ENCODE measurements at regions of chr7 and their contacts with region 1.

Region 1: DNA sequence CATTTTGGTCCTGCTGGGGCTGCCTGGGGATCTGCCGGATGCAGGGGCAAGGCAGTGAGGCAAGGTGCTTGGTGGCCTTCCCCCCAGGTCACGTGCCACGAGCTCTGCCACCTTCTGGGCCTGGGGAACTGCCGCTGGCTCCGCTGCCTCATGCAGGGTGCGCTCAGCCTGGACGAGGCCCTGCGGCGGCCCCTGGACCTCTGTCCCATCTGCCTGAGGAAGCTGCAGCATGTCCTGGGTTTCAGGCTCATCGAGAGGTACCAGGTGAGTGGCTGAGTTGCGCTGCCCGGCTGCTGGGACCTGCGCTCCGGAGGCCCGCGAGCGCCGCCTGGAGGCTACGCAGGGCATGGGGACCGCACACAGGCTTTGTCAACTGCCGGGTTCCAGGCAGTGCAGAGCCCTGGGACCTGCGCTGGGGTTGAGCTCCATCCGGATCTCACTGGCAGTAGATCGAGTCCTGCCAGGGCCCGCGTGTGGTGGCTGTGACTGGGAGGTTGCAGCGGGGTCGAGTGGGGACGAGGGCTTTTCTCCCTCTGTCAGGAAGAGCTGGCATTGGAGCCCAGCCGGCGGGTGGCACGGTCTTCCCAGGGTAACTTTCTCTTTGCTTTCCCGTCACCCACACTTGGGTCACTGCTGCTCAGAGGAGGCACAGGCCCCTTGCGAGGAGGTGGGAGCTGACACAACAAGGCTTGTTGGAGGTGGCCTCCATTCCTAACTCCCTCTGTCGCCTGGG is 21.7 kb downstream of the AMZ1 start:
- DNase-seq: peak; percentile 81
- ATAC-seq: peak; percentile 79
- H3K4me3 Mint-ChIP-seq: peak overlapping the region; percentile 88
- H3K27ac Mint-ChIP-seq: peak overlapping the region; percentile 94
- H3K4me1 Mint-ChIP-seq: peaks cover 41% of the 10 kb centered on the region
- H3K27me3 Mint-ChIP-seq: no peaks in the 10 kb centered on the region
- CTCF ChIP-seq: peak; percentile 75

Region 2: GRCh38 chr7:2451171-2452073 is 258.3 kb before region 1 on chr7:
- CTCF ChIA-PET with region 1: interaction called, 34 read pairs
- POLR2A ChIA-PET with region 1: interaction called, 12 read pairs
- intact Hi-C with region 1: loop called (anchors 1 kb)
- DNase-seq: peak; percentile 81
- ATAC-seq: peak; percentile 99
- H3K4me3 Mint-ChIP-seq: peak overlapping the region; percentile 74
- H3K27ac Mint-ChIP-seq: no peak overlapping the region
- H3K4me1 Mint-ChIP-seq: peaks cover 6% of the 10 kb centered on the region
- H3K27me3 Mint-ChIP-seq: no peaks in the 10 kb centered on the region
- CTCF ChIP-seq: peak; percentile 88

Region 3: GRCh38 chr7:2508327-2509215 is 201.1 kb before region 1 on chr7:
- CTCF ChIA-PET with region 1: interaction called, 5 read pairs
- POLR2A ChIA-PET with region 1: interaction called, 30 read pairs
- intact Hi-C with region 1: no loop called
- DNase-seq: peak; percentile 62
- ATAC-seq: peak; percentile 51
- H3K4me3 Mint-ChIP-seq: peak overlapping the region; percentile 65
- H3K27ac Mint-ChIP-seq: peak overlapping the region; percentile 95
- H3K4me1 Mint-ChIP-seq: peaks cover 68% of the 10 kb centered on the region
- H3K27me3 Mint-ChIP-seq: no peaks in the 10 kb centered on the region
- CTCF ChIP-seq: no peak

Region 4: DNA sequence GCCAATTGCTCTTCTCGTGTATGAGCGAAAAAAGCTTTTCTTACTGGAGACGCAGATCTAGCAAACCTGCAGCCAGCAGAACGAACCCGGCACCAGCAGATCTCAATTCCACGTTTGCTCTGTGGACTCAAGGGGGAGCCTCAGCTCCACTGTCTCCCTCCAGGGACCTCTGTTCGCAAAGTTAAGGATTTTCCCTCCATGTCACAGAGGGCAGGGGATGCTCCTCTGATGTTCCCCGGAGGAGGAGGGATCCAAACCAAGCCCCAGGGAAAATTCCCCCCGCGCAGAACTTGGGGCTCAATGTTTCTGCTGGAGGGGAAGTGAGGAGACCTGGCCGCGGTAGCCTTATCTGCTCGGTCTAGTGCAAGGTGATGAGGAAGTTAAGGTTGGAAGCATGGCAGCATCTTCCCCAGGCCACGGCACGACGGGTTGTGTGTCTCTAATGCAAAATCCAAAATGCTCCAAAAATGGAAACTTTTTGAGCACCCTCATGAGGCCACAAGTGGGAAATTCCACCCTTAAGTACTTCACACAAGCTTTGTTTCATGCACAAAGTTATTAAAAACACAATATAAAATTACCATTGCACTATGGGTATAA is 141.9 kb before region 1 on chr7:
- CTCF ChIA-PET with region 1: interaction called, 9 read pairs
- POLR2A ChIA-PET with region 1: no interaction called
- intact Hi-C with region 1: loop called (anchors 1 kb)
- DNase-seq: no peak
- ATAC-seq: peak; percentile 58
- H3K4me3 Mint-ChIP-seq: no peak overlapping the region
- H3K27ac Mint-ChIP-seq: no peak overlapping the region
- H3K4me1 Mint-ChIP-seq: peaks cover 18% of the 10 kb centered on the region
- H3K27me3 Mint-ChIP-seq: no peaks in the 10 kb centered on the region
- CTCF ChIP-seq: no peak

Region 5: DNA sequence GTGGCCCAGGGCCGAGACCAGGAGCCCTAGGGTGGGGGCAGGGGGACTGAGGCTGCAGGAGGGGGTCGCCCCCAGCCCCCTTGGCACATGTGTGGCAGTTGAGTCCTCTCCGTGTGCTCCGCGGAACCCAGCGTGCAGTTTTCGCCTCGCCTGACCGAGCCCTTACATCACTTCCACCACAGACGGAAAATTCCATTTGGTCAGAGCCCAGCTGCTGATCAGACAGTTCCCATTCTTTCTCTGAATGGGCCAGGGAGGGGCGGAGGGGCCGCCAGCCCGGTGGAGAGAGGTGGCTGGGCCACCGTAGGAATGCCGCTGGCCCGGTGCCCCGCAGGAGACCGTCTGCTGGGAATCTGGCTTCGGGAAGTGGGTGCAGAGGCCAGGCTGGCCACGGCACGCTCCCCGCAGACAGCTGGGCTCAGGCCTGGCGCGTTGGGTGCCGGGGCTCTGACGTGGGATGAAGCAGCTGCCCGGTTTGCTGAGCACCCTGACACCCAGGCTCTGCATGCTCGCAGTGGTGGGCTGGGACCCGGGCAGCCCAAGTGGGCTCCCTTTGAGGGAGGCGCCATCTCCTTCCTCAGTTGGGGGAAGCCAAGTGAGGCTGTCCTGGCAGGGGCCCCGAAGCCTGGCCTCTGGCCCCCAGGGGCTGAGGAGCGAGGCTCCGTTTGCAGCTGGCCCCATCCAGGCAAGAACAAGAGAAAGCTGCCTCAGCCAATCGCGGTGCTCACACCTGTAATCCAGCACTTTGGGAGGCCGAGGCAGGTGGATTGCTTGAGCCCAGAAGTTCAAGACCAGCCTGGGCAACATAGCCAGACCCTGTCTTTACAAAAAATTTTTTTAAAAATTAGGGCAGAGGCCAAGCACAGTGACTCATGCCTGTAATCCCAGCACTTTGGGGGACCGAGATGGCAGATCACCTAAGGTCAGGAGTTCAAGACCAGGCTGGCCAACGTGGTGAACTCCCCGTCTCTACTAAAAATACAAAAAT is 68.0 kb before region 1 on chr7:
- CTCF ChIA-PET with region 1: interaction called, 13 read pairs
- POLR2A ChIA-PET with region 1: interaction called, 7 read pairs
- intact Hi-C with region 1: no loop called
- DNase-seq: peak; percentile 66
- ATAC-seq: peak; percentile 59
- H3K4me3 Mint-ChIP-seq: peak overlapping the region; percentile 68
- H3K27ac Mint-ChIP-seq: peak overlapping the region; percentile 80
- H3K4me1 Mint-ChIP-seq: peaks cover 67% of the 10 kb centered on the region
- H3K27me3 Mint-ChIP-seq: no peaks in the 10 kb centered on the region
- CTCF ChIP-seq: no peak

Region 6: GRCh38 chr7:2688409-2689331 is 21.0 kb before region 1 on chr7:
- CTCF ChIA-PET with region 1: interaction called, 31 read pairs
- POLR2A ChIA-PET with region 1: interaction called, 15 read pairs
- intact Hi-C with region 1: no loop called
- DNase-seq: no peak
- ATAC-seq: peak; percentile 65
- H3K4me3 Mint-ChIP-seq: peak overlapping the region; percentile 45
- H3K27ac Mint-ChIP-seq: no peak overlapping the region
- H3K4me1 Mint-ChIP-seq: peaks cover 8% of the 10 kb centered on the region
- H3K27me3 Mint-ChIP-seq: peaks cover 29% of the 10 kb centered on the region
- CTCF ChIP-seq: no peak

Region 7: DNA sequence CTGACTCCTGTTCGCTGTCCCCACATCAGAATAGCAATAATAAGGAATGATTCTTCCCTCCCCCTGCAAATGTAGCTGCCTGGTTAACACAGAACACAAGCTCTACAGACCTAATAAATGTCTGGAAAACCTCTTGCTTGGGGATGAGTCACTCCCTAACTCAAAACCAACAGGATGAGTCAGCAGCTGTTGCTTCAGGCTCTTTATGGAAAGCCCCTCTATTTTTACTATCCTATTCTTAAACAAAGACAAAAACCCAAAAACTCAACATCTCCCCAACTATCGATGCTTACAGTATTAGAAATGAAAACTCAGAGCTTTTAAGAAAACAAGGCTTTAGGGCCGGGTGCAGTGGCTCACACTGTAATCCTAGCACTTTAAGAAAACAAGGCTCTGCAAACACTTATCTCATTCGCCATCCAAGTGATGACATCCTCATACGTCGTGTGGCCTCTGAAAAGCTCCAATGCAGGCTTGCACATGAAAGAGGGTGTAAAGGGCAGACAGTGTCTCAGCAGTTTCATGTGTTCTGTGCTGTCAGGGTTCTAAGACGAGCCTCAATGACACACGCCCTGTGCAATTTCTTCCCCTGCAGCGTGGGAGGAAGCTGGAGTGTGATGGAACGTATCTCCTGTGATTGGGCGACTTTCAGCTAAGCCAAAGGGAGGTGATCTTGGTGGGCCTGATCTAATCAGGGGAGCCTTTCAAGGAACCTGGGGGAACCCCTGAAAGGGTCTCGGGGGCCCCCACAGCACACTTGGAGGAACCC is 48.4 kb after region 1 on chr7:
- CTCF ChIA-PET with region 1: interaction called, 9 read pairs
- POLR2A ChIA-PET with region 1: interaction called, 18 read pairs
- intact Hi-C with region 1: no loop called
- DNase-seq: peak; percentile 24
- ATAC-seq: peak; percentile 82
- H3K4me3 Mint-ChIP-seq: peak overlapping the region; percentile 65
- H3K27ac Mint-ChIP-seq: peak overlapping the region; percentile 89
- H3K4me1 Mint-ChIP-seq: peaks cover 45% of the 10 kb centered on the region
- H3K27me3 Mint-ChIP-seq: no peaks in the 10 kb centered on the region
- CTCF ChIP-seq: no peak

Region 8: DNA sequence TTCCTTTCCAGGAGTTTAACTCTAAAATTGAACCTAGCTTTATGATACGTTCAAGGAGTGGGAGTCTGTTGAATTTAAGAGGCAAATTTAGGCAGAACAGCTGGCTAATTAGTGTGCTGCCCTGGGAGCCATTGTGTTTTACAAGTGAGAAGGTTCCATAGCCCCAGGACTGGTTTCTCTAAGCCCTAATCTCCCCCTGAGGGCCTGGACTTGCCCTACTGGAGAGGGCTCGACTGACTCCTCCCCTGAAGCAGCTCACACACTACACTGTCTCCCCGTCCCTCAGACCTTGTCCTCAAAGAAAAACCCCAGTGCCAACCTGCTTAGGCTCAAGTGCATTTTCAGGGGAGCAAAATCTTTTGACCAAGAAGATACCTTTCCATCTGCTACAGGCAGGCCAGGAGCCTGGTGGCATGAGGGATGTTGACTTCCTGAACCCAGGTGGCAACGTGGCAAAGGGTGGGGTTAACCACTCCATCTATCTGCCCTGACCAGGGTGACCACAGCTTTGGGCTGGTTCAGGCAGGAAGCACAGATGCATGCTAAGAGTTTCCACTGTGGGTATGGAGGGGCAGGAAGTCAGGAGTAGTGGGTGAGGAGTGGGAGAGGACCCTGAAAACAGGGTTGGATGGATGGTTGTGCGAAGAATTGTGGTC is 402.9 kb after region 1 on chr7:
- CTCF ChIA-PET with region 1: no interaction called
- POLR2A ChIA-PET with region 1: no interaction called
- intact Hi-C with region 1: no loop called
- DNase-seq: no peak
- ATAC-seq: no peak
- H3K4me3 Mint-ChIP-seq: no peak overlapping the region
- H3K27ac Mint-ChIP-seq: no peak overlapping the region
- H3K4me1 Mint-ChIP-seq: peaks cover 4% of the 10 kb centered on the region
- H3K27me3 Mint-ChIP-seq: peaks cover 19% of the 10 kb centered on the region
- CTCF ChIP-seq: no peak

Measured in activated B cell treated with CpG ODN at 0.5 μM for 24 hours (primary cell).